Natural killer cell (primary cell): ENCODE measurements at regions of chr9 and their contacts with region 1.

Region 1: DNA sequence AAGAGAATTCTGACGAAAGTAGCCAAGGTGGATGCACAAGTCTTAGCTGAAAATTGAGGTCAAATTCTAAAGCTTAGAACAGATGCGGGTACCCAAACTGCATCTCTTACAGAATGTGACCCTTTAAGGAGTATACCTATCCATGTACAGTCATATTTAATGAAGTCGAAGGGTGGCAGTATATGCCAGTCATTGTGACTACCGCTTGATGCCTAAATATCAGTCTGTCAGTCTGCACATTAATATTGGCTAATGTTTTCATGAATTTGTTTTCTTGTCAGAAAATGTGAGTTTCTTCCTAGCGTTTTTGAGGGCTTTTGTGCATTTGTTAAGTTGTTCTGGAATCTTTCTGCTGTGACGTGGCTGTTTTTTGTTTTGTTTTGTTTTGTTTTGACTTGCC is 264.5 kb upstream of the ELAVL2 start:
- DNase-seq: no peak
- ATAC-seq: no peak
- H3K4me3 ChIP-seq: no peak overlapping the region
- H3K4me3 Mint-ChIP-seq: no peak overlapping the region
- H3K27ac ChIP-seq: no peak overlapping the region
- H3K27ac Mint-ChIP-seq: no peak overlapping the region
- H3K4me1 ChIP-seq: no peaks in the 10 kb centered on the region
- H3K4me1 Mint-ChIP-seq: no peaks in the 10 kb centered on the region
- H3K27me3 ChIP-seq: no peaks in the 10 kb centered on the region
- H3K27me3 Mint-ChIP-seq: no peaks in the 10 kb centered on the region
- CTCF ChIP-seq: no peak

Region 2: GRCh38 chr9:24036459-24036858 is 54.1 kb before region 1 on chr9:
- intact Hi-C with region 1: loop called (anchors 5 kb)
- DNase-seq: no peak
- ATAC-seq: no peak
- H3K4me3 ChIP-seq: no peak overlapping the region
- H3K4me3 Mint-ChIP-seq: no peak overlapping the region
- H3K27ac ChIP-seq: no peak overlapping the region
- H3K27ac Mint-ChIP-seq: no peak overlapping the region
- H3K4me1 ChIP-seq: no peaks in the 10 kb centered on the region
- H3K4me1 Mint-ChIP-seq: no peaks in the 10 kb centered on the region
- H3K27me3 ChIP-seq: no peaks in the 10 kb centered on the region
- H3K27me3 Mint-ChIP-seq: no peaks in the 10 kb centered on the region
- CTCF ChIP-seq: no peak